Activated T-helper 2 cell treated with anti-CD3 and anti-CD28 coated beads, Interferon-gamma antibody, Interleukin-2, Interleukin-4, amounts not matched to agents 10 μg/mL and 5 μg/mL and 100 μg/mL, durations not matched to agents 14 hours and 24 hours and 36 hours (primary cell): ENCODE measurements at regions of chr12 and their contacts with region 1.

Region 1: DNA sequence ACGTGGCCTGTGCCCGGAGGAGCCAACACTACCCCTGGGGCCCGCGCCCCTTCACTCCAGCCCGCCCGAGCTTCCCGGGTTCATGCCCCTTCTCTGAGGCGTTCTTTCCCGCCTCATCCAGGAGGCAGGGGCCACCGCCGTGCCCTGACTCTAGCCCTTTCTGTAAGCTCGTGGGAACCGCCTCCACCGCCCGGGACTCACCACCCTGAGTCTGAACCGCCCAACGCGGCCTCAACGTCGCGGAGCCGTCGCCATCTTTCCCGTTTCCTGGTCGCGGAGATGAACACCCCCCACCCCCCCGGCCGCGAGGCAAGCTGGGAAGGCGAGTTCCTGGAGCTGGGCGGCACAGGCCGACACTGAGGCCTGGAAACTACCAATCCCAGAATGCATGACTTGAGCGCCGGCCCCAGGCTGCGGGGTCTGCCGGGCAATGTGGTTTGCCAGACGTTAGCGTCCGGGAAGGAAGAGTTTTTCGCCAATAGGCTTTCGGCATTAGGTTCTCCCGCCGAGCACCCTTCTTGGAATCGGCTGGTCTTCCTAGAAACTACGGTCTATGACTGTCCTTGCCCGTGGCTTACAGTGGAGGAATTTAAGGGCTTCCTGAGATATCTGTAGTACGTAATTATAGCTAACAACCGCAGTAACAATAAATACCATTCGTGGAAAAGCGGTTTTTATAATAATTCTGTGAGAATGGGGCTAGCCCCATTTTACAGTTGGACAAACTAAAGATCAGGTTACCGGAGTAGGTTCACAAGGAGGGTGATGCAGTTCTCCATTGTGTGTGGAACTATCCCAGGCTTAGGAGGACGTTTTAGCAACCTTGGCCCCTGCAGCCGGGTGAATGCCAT is at the start of gene DDX23:
- DNase-seq: peak; percentile 91
- H3K4me3 Mint-ChIP-seq: peak within 1 kb of the TSS; percentile 88
- H3K27ac Mint-ChIP-seq: peak within 1 kb of the TSS; percentile 94
- H3K4me1 Mint-ChIP-seq: peaks cover 21% of the 10 kb centered on the region
- H3K27me3 Mint-ChIP-seq: no peaks in the 10 kb centered on the region
- total RNA-seq, gene DDX23: 114 and 124 TPM in 2 replicates

Region 2: GRCh38 chr12:48865434-48866290 is 13.6 kb after region 1 on chr12 and contains the start of gene RND1:
- intact Hi-C with region 1: loop called (anchors 1 kb)
- DNase-seq: peak; percentile 82
- H3K4me3 Mint-ChIP-seq: peak within 1 kb of the TSS; percentile 88
- H3K27ac Mint-ChIP-seq: peak within 1 kb of the TSS; percentile 82
- H3K4me1 Mint-ChIP-seq: peaks cover 20% of the 10 kb centered on the region
- H3K27me3 Mint-ChIP-seq: peaks cover 27% of the 10 kb centered on the region
- total RNA-seq, gene RND1: 3.5 and 4.7 TPM in 2 replicates

Region 3: GRCh38 chr12:48924617-48925303 is 72.7 kb after region 1 on chr12:
- intact Hi-C with region 1: loop called (anchors 2 kb)
- DNase-seq: peak; percentile 51
- H3K4me3 Mint-ChIP-seq: peak overlapping the region; percentile 87
- H3K27ac Mint-ChIP-seq: peak overlapping the region; percentile 76
- H3K4me1 Mint-ChIP-seq: peaks cover 26% of the 10 kb centered on the region
- H3K27me3 Mint-ChIP-seq: no peaks in the 10 kb centered on the region

Region 4: DNA sequence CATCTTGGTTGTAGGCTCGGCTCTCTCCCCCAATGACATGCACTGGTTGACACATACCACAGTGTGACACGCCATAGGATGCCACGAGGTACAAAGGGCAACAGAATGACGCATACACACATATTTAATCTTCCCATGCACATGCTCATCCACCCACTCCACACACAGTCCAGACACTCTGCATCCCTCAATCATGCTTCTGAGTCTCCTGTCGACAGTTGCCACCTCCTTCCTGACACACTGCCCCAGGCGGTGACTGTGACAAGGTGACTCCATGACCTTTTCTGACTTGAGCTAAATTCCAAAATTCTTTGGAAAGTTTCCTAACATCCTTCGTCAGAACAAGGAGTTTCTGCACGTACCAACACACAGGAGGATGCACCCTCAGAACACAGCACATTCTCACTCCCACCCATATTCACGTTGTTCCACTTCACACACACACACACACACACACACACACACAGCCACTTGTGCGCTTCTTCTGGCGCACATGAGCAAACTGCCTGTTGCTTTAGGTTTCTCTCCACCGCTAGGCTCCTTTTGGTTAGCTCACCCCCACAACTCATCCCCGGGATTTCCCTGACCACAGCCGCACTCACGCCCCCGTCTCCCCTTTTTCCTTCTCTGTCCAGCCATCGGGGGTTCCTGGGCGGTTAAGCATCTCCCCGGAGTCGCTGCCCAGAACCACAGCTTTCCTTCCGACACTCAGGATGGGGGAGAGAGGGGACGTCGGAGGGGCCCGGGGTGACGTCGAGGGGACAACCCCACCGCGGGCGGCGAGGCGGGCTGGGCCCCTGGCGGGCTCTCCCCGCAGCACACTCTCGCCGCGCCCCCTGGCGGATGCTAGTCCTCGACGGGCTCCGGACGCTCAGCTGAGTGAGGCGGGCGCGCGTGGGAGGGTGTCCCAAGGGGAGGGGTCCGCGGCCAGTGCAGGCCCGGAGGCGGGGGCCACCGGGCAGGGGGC is 125.5 kb after region 1 on chr12:
- intact Hi-C with region 1: loop called (anchors 10 kb)
- DNase-seq: peak; percentile 61
- H3K4me3 Mint-ChIP-seq: peak overlapping the region; percentile 2
- H3K27ac Mint-ChIP-seq: peak overlapping the region; percentile 62
- H3K4me1 Mint-ChIP-seq: peaks cover 47% of the 10 kb centered on the region
- H3K27me3 Mint-ChIP-seq: peaks cover 82% of the 10 kb centered on the region

Region 5: DNA sequence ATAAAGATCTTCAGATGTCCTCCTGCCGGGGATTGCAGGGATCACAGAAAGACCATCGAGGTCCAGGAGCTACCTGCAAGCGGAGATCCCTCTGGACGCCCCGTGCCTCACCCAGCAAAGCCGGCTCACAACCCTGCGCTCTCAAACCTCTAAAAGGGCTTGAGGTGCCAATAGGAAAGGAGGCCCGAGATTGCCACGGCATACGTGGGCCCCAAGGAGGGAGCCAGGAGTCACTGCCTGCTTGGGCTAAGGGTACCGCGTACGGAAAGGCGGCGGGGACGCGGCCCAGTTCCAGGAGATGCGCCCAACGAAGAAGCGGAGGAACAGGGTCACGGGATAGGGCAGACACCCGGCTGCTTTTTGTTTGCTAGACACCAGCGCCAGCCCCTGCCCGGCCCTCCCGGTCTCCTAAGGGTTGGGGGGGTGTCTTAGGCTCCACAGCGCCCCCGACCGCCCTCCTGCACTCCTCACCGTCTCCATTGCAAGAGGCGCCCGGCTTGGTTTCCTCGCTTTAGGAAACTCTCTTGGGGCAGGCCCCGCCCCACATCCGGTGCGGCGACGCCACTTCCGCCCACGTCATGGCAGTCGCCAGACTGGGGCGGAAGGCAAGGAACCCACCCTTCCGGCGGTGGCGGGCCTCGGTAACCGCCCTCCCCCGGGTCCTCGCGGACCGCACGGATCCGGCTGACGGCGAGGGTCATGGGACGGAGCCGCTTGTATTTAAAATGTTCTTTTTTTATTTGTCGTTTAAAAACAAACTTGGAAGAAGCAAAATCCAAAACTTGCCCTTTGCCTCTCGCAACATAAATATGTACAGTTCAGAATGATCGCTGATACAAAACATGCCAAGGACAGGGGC is 166.4 kb after region 1 on chr12 and contains the start of gene PRKAG1:
- intact Hi-C with region 1: loop called (anchors 1 kb)
- DNase-seq: peak; percentile 96
- H3K4me3 Mint-ChIP-seq: peak within 1 kb of the TSS; percentile 90
- H3K27ac Mint-ChIP-seq: peak within 1 kb of the TSS; percentile 93
- H3K4me1 Mint-ChIP-seq: peaks cover 25% of the 10 kb centered on the region
- H3K27me3 Mint-ChIP-seq: no peaks in the 10 kb centered on the region
- total RNA-seq, gene PRKAG1: 65.1 and 65.7 TPM in 2 replicates

Region 6: DNA sequence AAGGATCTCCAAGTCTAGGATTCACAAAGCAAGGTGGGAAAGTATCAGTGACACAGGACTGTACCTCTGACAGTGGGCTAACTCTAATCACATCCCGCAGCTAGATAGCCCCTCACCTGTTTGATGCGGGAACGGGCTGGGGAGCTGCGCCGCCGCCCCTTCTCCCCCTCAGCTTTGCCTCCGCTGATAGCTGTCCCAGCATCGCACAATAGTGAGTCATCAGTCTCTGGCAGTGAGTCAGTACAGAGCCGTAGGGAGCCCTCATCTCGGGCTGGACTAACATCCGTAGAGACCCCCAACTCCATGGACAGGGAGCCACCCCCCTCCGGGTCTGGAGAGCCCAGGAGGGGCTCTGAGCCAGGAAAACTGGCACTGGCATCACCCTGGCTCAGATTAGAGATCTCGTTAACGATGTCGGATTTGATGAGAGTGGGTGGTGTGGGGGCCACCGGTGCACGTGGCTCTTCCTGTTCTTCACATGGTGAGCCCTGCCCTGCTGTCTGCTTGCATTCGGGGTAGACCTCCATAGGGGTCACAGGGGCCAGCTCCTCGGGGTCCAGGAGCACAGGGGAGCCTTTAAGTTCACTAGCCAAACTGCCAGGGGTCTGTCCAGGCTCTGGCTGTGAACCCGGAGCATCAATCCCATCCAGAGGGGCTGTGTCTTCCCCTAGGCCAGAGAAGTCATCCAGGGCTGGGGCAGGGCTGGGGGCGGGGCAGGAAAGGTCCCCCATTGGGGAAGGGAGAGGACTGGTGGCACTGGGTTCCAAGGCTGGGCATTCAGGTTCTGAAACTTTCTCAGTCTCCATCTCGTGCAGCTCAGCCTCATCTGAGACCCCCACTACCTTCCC is 197.7 kb after region 1 on chr12:
- intact Hi-C with region 1: no loop called
- DNase-seq: no peak
- H3K4me3 Mint-ChIP-seq: no peak overlapping the region
- H3K27ac Mint-ChIP-seq: no peak overlapping the region
- H3K4me1 Mint-ChIP-seq: peaks cover 2% of the 10 kb centered on the region
- H3K27me3 Mint-ChIP-seq: no peaks in the 10 kb centered on the region

Region 7: DNA sequence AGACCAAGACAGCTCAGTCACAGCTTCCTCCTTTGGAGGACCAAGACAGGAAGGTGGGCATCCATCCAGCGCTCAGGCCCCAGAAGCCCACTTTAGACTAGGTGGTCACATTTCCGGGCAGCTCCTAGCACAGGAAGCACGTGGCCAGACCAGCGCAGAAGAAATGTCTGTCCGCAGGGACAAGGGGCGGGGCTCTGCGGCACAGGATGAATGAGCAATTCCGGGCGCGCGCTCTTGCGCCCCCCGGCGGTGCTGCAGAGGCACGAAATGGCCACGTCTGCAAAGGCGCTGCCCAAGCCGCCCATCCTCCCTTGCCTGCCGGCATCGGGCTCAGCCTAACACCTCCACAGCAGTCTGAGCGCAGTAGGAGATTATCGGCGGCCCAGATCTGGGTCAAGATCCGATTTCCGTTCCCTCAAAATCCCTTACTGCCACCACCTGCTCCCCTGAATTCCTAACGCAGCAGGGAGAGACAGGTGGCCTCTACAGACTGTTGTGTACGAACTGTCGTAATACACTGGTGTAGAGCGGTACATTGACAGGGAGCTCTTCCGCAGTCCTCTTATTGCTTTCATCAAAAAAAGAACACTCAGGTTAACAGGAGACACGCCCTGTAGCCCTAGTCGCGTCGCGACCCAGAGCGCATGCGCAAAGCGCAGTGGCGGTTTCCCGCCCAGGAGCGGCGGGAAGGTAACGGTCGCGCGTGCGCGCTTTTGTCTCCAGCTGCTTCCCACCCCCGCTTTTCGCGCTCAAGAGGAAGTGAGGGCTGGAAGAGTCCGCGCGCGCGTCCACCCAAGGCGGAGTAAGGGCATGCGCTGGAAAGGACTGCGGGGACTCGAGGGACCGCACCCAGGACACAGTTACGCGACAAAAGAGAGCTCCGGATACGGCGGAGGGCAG is 278.3 kb after region 1 on chr12:
- intact Hi-C with region 1: loop called (anchors 5 kb)
- DNase-seq: peak; percentile 92
- H3K4me3 Mint-ChIP-seq: peak overlapping the region; percentile 98
- H3K27ac Mint-ChIP-seq: peak overlapping the region; percentile 98
- H3K4me1 Mint-ChIP-seq: peaks cover 38% of the 10 kb centered on the region
- H3K27me3 Mint-ChIP-seq: no peaks in the 10 kb centered on the region